PC-9 (cell line): ENCODE measurements at regions of chr5 and their contacts with region 1.

Region 1: DNA sequence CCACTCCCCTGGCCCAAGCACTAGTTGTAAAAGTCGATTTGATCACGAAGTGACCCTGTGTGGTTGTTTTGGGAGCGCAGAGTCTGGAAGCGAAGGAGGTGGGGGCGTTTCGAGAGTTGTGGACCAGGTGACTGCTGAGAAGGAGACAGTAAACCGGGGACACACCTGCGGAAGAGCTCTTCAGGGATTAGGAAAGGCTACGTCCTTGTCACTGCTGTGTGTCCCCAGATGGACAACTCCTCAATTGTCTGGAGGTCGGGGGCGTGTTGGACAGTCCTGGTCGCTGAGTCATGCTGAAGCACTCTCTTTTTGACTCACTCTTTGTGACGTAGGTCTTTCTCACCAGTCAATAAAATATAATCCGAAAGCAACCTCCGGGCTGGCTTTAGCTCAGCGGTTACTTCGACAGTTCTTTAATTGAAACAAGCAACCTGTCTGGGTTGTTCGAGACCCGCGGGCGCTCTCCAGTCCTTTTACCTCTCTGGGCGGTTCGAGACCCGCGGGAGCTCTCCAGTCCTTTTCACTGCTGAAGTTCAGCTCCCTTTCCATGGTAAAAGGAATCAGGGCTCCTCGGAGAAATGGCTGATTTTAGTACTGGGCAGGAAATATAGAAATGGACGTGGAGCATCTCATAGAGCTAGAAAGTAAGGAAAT is 10.8 kb downstream of the ZMAT2 start:
- DNase-seq: peak; percentile 95 to 97
- H3K4me3 ChIP-seq: peak overlapping the region; percentile 71
- H3K27ac ChIP-seq: peak overlapping the region; percentile 94
- H3K4me1 ChIP-seq: peaks cover 5% of the 10 kb centered on the region
- H3K27me3 ChIP-seq: no peaks in the 10 kb centered on the region
- CTCF ChIP-seq: no peak

Region 2: DNA sequence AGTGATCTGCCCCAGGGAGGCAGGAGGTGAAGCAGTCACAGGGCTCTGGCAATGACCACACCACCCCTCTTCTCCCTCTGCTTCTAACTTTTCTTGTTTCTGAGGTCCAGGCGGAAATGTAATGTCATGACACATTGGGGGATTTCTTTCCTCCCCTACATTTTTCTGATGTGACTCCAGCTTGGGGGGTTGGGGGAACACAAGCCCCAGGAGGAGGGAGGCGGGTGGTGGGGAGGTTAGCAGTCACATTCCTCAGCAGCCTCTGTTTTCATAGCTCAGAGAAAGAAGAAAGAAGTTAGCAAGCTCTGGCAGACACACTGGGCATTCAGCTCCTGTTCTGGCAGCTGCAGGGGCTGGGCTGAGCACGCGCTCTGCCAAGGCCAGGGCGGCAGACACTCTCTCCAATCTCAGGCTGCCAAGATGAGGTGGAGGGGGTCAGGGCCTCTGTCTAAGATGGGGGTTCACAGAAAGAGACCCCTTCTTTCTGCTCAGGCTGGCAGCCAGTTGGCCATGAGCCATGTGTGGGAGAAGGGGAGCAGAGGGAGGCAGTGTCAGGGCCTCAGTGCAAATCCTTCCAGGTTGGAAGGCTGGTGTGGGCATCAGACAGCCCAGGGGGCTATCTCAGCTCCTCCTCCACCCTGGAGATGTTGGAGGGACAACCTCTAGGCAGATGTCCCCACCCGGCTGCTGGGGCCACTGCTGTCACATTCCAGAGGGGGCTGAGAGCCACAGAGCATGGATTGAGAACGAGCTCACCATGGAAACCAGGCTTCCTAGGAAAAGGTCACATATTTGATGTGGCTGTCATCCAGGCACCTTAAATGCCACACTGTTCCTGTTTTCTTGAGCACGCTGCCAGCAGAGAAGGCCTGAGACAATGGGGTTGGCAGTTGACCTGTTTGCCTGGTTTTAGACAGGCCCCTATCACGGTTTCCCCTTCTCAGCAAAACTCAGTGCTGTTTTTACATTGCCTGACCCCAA is 388.0 kb before region 1 on chr5:
- CTCF ChIA-PET with region 1: no interaction called
- POLR2A ChIA-PET with region 1: no interaction called
- intact Hi-C with region 1: no loop called
- DNase-seq: peak; percentile 80 to 95
- H3K4me3 ChIP-seq: peak overlapping the region; percentile 43; the same call in 1 of the 2 replicates
- H3K27ac ChIP-seq: peak overlapping the region; percentile 94
- H3K4me1 ChIP-seq: peaks cover 61% of the 10 kb centered on the region
- H3K27me3 ChIP-seq: no peaks in the 10 kb centered on the region
- CTCF ChIP-seq: no peak

Region 3: GRCh38 chr5:140690941-140691924 is 19.8 kb before region 1 on chr5 and contains the starts of genes HARS1 and HARS2:
- CTCF ChIA-PET with region 1: no interaction called
- POLR2A ChIA-PET with region 1: interaction called, 11 read pairs
- intact Hi-C with region 1: loop called (anchors 1 kb)
- DNase-seq: peak; percentile 93 to 96
- H3K4me3 ChIP-seq: peak within 1 kb of the TSS; percentile 96
- H3K27ac ChIP-seq: peak within 1 kb of the TSS; percentile 68
- H3K4me1 ChIP-seq: peaks cover 25% of the 10 kb centered on the region
- H3K27me3 ChIP-seq: no peaks in the 10 kb centered on the region
- CTCF ChIP-seq: no peak
- total RNA-seq, gene HARS1: 52.0 and 64.3 TPM in 2 replicates
- total RNA-seq, gene HARS2: 28.8 and 31.1 TPM in 2 replicates

Region 4: GRCh38 chr5:140725799-140726471 is 14.9 kb after region 1 on chr5:
- CTCF ChIA-PET with region 1: interaction called, 13 read pairs
- POLR2A ChIA-PET with region 1: interaction called, 7 read pairs
- intact Hi-C with region 1: no loop called
- DNase-seq: peak; percentile 87 to 94
- H3K4me3 ChIP-seq: peak overlapping the region; percentile 61; the same call in 1 of the 2 replicates
- H3K27ac ChIP-seq: no peak overlapping the region
- H3K4me1 ChIP-seq: no peaks in the 10 kb centered on the region
- H3K27me3 ChIP-seq: no peaks in the 10 kb centered on the region
- CTCF ChIP-seq: no peak

Region 5: GRCh38 chr5:140785905-140786686 is 75.1 kb after region 1 on chr5 and contains the start of gene PCDHA1:
- CTCF ChIA-PET with region 1: no interaction called
- POLR2A ChIA-PET with region 1: no interaction called
- intact Hi-C with region 1: no loop called
- DNase-seq: no peak
- H3K4me3 ChIP-seq: no peak within 1 kb of the TSS
- H3K27ac ChIP-seq: no peak within 1 kb of the TSS
- H3K4me1 ChIP-seq: no peaks in the 10 kb centered on the region
- H3K27me3 ChIP-seq: peaks cover 10% of the 10 kb centered on the region; the same call in 1 of the 2 replicates
- CTCF ChIP-seq: 0 out of 2 replicates have a peak, but pooled peaks have one; percentile 26
- total RNA-seq, gene PCDHA1: not detected in 2 replicates